IMR-90 (cell line): ENCODE measurements at regions of chr11 and their contacts with region 1.

Region 1: DNA sequence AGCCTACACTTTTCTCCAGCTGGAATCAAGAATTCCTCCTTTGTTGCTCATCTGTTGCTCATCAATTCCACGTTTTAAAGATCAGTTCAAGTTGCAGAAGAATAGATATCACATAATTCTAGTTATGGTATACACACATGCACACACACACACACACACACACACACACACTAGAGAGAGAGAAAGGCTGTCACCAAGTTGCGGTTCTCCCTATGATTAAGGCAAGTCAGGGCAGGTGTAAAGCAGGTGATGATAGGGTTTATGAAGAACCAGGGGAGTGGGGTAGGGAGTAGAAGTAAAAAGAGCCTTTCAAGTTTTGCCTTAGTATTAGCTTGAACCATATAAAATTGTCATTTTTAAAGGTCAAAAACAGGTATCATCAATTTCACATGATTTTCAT is 31.7 kb upstream of the TMPRSS4 start:
- DNase-seq: no peak
- ATAC-seq: no peak
- H3K4me3 ChIP-seq: no peak overlapping the region
- H3K27ac ChIP-seq: no peak overlapping the region
- H3K4me1 ChIP-seq: no peaks in the 10 kb centered on the region
- H3K27me3 ChIP-seq: peaks cover 8% of the 10 kb centered on the region; the same call in 1 of the 2 replicates
- CTCF ChIP-seq: no peak
- POLR2A ChIP-seq: no peak
- RAD21 ChIP-seq: no peak

Region 2: DNA sequence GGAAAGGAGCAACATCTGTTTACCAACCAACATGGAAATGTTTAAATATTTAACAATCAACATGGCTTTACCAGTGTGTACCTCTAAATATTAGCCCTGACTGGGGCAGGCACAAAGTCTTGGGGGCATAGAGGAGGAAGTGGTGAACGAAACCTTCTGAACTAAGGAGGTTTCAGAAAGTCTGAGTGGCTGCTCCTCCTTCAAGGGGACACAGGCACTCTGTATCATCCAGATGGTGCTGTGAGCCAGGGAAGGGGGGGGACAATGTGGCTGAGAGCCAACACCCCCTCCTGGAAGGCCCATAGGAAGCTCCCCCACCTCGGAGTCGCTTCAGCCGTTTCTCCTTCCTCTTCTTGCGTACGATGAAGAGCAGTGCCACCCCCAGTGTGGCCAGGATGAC is 609.9 kb before region 1 on chr11:
- CTCF ChIA-PET with region 1: no interaction called
- POLR2A ChIA-PET with region 1: interaction called, 11 read pairs
- dilution Hi-C with region 1: no loop called
- in situ Hi-C with region 1: no loop called
- intact Hi-C with region 1: no loop called
- DNase-seq: no peak
- ATAC-seq: no peak
- H3K4me3 ChIP-seq: no peak overlapping the region
- H3K27ac ChIP-seq: no peak overlapping the region
- H3K4me1 ChIP-seq: no peaks in the 10 kb centered on the region
- H3K27me3 ChIP-seq: peaks cover 31% of the 10 kb centered on the region
- CTCF ChIP-seq: no peak
- POLR2A ChIP-seq: no peak
- RAD21 ChIP-seq: no peak

Region 3: GRCh38 chr11:117855912-117856651 is 189.1 kb before region 1 on chr11:
- CTCF ChIA-PET with region 1: no interaction called
- POLR2A ChIA-PET with region 1: interaction called, 11 read pairs
- dilution Hi-C with region 1: no loop called
- in situ Hi-C with region 1: no loop called
- intact Hi-C with region 1: no loop called
- DNase-seq: no peak
- ATAC-seq: no peak
- H3K4me3 ChIP-seq: no peak overlapping the region
- H3K27ac ChIP-seq: no peak overlapping the region
- H3K4me1 ChIP-seq: no peaks in the 10 kb centered on the region
- H3K27me3 ChIP-seq: peaks cover 8% of the 10 kb centered on the region
- CTCF ChIP-seq: no peak
- POLR2A ChIP-seq: no peak
- RAD21 ChIP-seq: no peak